Naive thymus-derived CD8-positive, alpha-beta T cell (primary cell): ENCODE measurements at regions of chr3 and their contacts with region 1.

Region 1: GRCh38 chr3:42581709-42582473 is at the start of gene SEC22C:
- DNase-seq: peak; percentile 90 to 98 (median 94)
- ATAC-seq: peak; percentile 89 to 90
- H3K4me3 Mint-ChIP-seq: peak within 1 kb of the TSS; percentile 88 to 96 (median 94)
- H3K27ac Mint-ChIP-seq: peak within 1 kb of the TSS; percentile 94 to 100 (median 99)
- H3K4me1 Mint-ChIP-seq: peaks cover 36 to 48% (median 46%) of the 10 kb centered on the region in 4 donors
- H3K27me3 Mint-ChIP-seq: no peaks in the 10 kb centered on the region
- polyA plus RNA-seq, gene SEC22C: 33.9 to 39.3 (median 38.2) TPM

Region 2: GRCh38 chr3:41224120-41224806 is 1357.6 kb before region 1 on chr3:
- POLR2A ChIA-PET with region 1: no interaction called
- DNase-seq: no peak
- ATAC-seq: no peak
- H3K4me3 Mint-ChIP-seq: no peak overlapping the region
- H3K27ac Mint-ChIP-seq: peak overlapping the region in 5 of 10 donors; percentile 7 to 74 (median 47)
- H3K4me1 Mint-ChIP-seq: peaks cover 26 to 78% (median 71%) of the 10 kb centered on the region in 4 donors
- H3K27me3 Mint-ChIP-seq: no peaks in the 10 kb centered on the region

Region 3: DNA sequence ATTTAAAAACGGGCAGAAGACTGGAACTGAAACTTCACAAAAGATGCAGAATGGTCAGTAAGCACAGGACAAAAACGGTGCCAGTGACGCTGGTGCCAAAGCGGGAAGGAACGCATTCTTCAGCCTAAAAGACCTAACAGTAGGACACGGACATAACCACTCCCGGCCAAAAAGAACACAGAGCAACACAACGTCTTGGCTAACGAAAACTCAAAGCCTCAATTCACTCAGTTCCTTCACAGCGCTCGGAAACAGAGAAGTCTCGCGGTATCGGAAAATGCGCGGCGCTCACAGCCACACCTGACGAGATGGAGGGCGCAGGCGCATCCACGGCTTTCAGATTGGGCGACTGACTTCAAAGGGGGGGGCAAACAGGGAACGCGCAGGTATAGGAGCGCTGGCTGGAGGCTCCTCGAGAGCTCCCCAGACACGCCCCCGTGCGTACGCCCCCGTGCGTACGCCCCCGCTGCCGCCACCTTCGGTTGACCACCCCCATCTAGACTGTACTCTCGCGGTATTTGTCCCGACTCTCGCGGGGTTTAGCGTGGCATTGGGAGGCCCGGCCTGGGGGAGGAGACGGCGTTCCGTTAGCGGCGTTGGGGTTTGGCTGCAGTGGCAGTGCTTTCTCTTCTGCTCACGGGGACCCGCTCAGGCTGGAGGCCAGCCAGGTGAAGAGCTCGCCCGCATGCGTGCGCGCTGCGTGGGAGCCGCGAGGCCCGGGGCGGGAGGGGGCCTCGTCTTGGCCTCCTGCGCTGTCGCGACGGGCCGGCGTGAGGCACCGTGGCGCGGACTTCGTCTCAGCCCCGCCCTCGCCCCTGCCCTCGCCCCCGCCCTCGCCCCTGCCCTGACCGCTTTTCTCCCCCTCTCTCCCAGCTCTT is 18.5 kb after region 1 on chr3 and contains the start of gene NKTR:
- POLR2A ChIA-PET with region 1: interaction called, 31 read pairs
- DNase-seq: peak; percentile 97 to 100 (median 100)
- ATAC-seq: peak; percentile 86 to 93
- H3K4me3 Mint-ChIP-seq: peak within 1 kb of the TSS; percentile 86 to 96 (median 93)
- H3K27ac Mint-ChIP-seq: peak within 1 kb of the TSS; percentile 92 to 99 (median 98)
- H3K4me1 Mint-ChIP-seq: peaks cover 6 to 45% (median 34%) of the 10 kb centered on the region in 4 donors
- H3K27me3 Mint-ChIP-seq: no peaks in the 10 kb centered on the region
- polyA plus RNA-seq, gene NKTR: 9.5 to 14.3 (median 10.8) TPM